Activated CD4-positive, alpha-beta memory T cell treated with anti-CD3 and anti-CD28 coated beads for 36 hours (primary cell): ENCODE measurements at regions of chr16 and their contacts with region 1.

Region 1: GRCh38 chr16:29700253-29700987 is 21.4 kb downstream of the QPRT start:
- DNase-seq: peak; percentile 86
- H3K4me3 Mint-ChIP-seq: peak overlapping the region; percentile 26
- H3K27ac Mint-ChIP-seq: peak overlapping the region; percentile 80
- H3K4me1 Mint-ChIP-seq: peaks cover 34% of the 10 kb centered on the region
- H3K27me3 Mint-ChIP-seq: no peaks in the 10 kb centered on the region

Region 2: GRCh38 chr16:29290631-29291247 is 409.7 kb before region 1 on chr16:
- CTCF ChIA-PET with region 1: no interaction called
- POLR2A ChIA-PET with region 1: no interaction called
- intact Hi-C with region 1: no loop called
- DNase-seq: peak; percentile 88
- H3K4me3 Mint-ChIP-seq: peak overlapping the region; percentile 37
- H3K27ac Mint-ChIP-seq: no peak overlapping the region
- H3K4me1 Mint-ChIP-seq: peaks cover 9% of the 10 kb centered on the region
- H3K27me3 Mint-ChIP-seq: no peaks in the 10 kb centered on the region

Region 3: GRCh38 chr16:29720699-29721098 is 20.3 kb after region 1 on chr16:
- CTCF ChIA-PET with region 1: interaction called, 68 read pairs
- POLR2A ChIA-PET with region 1: interaction called, 5 read pairs
- intact Hi-C with region 1: loop called (anchors 1 kb)
- DNase-seq: no peak
- H3K4me3 Mint-ChIP-seq: no peak overlapping the region
- H3K27ac Mint-ChIP-seq: no peak overlapping the region
- H3K4me1 Mint-ChIP-seq: peaks cover 13% of the 10 kb centered on the region
- H3K27me3 Mint-ChIP-seq: no peaks in the 10 kb centered on the region

Region 4: DNA sequence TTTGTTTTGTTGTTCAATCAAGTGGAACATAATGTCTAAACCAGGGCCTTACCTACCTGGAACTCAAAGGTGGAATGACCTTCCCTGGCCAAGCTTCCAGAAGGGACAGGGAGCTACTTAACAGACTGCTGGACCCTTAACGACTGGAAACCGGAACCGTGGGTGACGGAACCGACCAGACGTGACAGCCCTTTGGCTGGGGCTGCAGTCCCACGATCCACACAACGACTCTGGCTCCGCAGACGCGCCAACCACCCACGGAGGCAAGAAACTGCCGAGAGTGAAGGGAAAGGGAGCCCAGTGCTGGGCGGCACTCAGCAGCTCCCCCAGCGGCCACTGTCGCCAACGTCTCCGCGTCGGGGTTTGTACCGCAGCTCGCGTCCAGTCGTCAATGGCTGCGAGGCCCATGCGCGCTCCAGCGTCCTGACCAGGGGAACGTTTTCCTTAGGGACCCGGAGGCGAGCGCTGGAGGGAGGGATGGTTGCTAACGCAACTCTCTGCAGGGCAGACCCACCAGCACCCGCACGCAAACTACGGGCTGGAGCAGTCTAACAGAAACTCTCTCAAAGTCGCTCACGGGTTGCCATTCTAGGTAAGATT is 84.6 kb after region 1 on chr16:
- CTCF ChIA-PET with region 1: interaction called, 42 read pairs
- POLR2A ChIA-PET with region 1: interaction called, 4 read pairs
- intact Hi-C with region 1: loop called (anchors 1 kb)
- DNase-seq: peak; percentile 88
- H3K4me3 Mint-ChIP-seq: peak overlapping the region; percentile 47
- H3K27ac Mint-ChIP-seq: peak overlapping the region; percentile 65
- H3K4me1 Mint-ChIP-seq: peaks cover 30% of the 10 kb centered on the region
- H3K27me3 Mint-ChIP-seq: no peaks in the 10 kb centered on the region

Region 5: GRCh38 chr16:29815793-29816693 is 115.6 kb after region 1 on chr16 and contains the start of gene PAGR1:
- CTCF ChIA-PET with region 1: interaction called, 79 read pairs
- POLR2A ChIA-PET with region 1: interaction called, 12 read pairs
- intact Hi-C with region 1: loop called (anchors 1 kb)
- DNase-seq: peak; percentile 99
- H3K4me3 Mint-ChIP-seq: peak within 1 kb of the TSS; percentile 98
- H3K27ac Mint-ChIP-seq: peak within 1 kb of the TSS; percentile 90
- H3K4me1 Mint-ChIP-seq: peaks cover 41% of the 10 kb centered on the region
- H3K27me3 Mint-ChIP-seq: no peaks in the 10 kb centered on the region
- total RNA-seq, gene PAGR1: 21.9 to 24.0 TPM

Region 6: GRCh38 chr16:30018731-30019158 is 318.3 kb after region 1 on chr16:
- CTCF ChIA-PET with region 1: interaction called, 6 read pairs
- POLR2A ChIA-PET with region 1: no interaction called
- intact Hi-C with region 1: loop called (anchors 1 kb)
- DNase-seq: no peak
- H3K4me3 Mint-ChIP-seq: no peak overlapping the region
- H3K27ac Mint-ChIP-seq: no peak overlapping the region
- H3K4me1 Mint-ChIP-seq: peaks cover 4% of the 10 kb centered on the region
- H3K27me3 Mint-ChIP-seq: peaks cover 3% of the 10 kb centered on the region